ENCODE measurements at regions of chr5 and their contacts with region 1.

Region 1: GRCh38 chr5:82165740-82166530 is 112.2 kb downstream of the RPS23 start:
- DNase-seq: peak in 7 of 9 experiments; percentile 1 to 76 (median 30)
- ATAC-seq: peak; percentile 99
- H3K4me3 ChIP-seq: no peak overlapping the region
- H3K4me3 Mint-ChIP-seq: no peak overlapping the region
- H3K27ac ChIP-seq: no peak overlapping the region
- H3K27ac Mint-ChIP-seq: no peak overlapping the region
- H3K4me1 ChIP-seq: no peaks in the 10 kb centered on the region
- H3K4me1 Mint-ChIP-seq: no peaks in the 10 kb centered on the region
- H3K27me3 ChIP-seq: no peaks in the 10 kb centered on the region
- H3K27me3 Mint-ChIP-seq: no peaks in the 10 kb centered on the region
- CTCF ChIP-seq: peak; percentile 78

Region 2: GRCh38 chr5:81425569-81425968 is 740.4 kb before region 1 on chr5:
- CTCF ChIA-PET with region 1: interaction called, 36 read pairs
- POLR2A ChIA-PET with region 1: interaction called, 3 read pairs
- intact Hi-C with region 1: loop called (anchors 1 kb)
- DNase-seq: peak in 2 of 9 experiments; percentile 42 to 57
- ATAC-seq: peak; percentile 49
- H3K4me3 ChIP-seq: no peak overlapping the region
- H3K4me3 Mint-ChIP-seq: no peak overlapping the region
- H3K27ac ChIP-seq: no peak overlapping the region
- H3K27ac Mint-ChIP-seq: no peak overlapping the region
- H3K4me1 ChIP-seq: no peaks in the 10 kb centered on the region
- H3K4me1 Mint-ChIP-seq: peaks cover 7% of the 10 kb centered on the region
- H3K27me3 ChIP-seq: no peaks in the 10 kb centered on the region
- H3K27me3 Mint-ChIP-seq: no peaks in the 10 kb centered on the region
- CTCF ChIP-seq: peak; percentile 71

Region 3: GRCh38 chr5:81506900-81507588 is 658.9 kb before region 1 on chr5:
- CTCF ChIA-PET with region 1: interaction called, 14 read pairs
- POLR2A ChIA-PET with region 1: no interaction called
- intact Hi-C with region 1: loop called (anchors 1 kb)
- DNase-seq: peak in 7 of 9 experiments; percentile 2 to 72 (median 28)
- ATAC-seq: peak; percentile 65
- H3K4me3 ChIP-seq: no peak overlapping the region
- H3K4me3 Mint-ChIP-seq: no peak overlapping the region
- H3K27ac ChIP-seq: no peak overlapping the region
- H3K27ac Mint-ChIP-seq: no peak overlapping the region
- H3K4me1 ChIP-seq: no peaks in the 10 kb centered on the region
- H3K4me1 Mint-ChIP-seq: no peaks in the 10 kb centered on the region
- H3K27me3 ChIP-seq: no peaks in the 10 kb centered on the region
- H3K27me3 Mint-ChIP-seq: no peaks in the 10 kb centered on the region
- CTCF ChIP-seq: peak; percentile 66

Region 4: DNA sequence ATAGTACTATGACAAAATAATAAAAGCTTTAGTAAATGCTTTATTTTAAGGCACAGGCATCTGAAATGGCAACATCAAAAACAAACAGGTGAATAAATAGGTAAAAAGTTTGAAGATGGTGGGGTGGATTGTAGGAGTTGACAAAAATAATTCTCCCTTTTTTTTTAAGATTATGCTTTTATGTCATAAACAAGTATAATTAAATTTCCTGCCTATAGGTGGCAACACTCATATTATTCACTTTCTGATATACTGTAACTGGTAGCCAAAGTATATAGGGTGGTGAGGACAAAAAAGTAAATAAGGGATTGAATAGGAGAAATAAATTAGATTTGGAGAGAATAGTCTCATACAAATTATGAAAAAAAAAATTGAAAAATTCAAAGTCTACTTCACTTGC is 652.0 kb before region 1 on chr5:
- CTCF ChIA-PET with region 1: interaction called, 10 read pairs
- POLR2A ChIA-PET with region 1: no interaction called
- intact Hi-C with region 1: no loop called
- DNase-seq: peak in 1 of 9 experiments; percentile 35
- ATAC-seq: peak; percentile 42
- H3K4me3 ChIP-seq: no peak overlapping the region
- H3K4me3 Mint-ChIP-seq: no peak overlapping the region
- H3K27ac ChIP-seq: no peak overlapping the region
- H3K27ac Mint-ChIP-seq: no peak overlapping the region
- H3K4me1 ChIP-seq: no peaks in the 10 kb centered on the region
- H3K4me1 Mint-ChIP-seq: no peaks in the 10 kb centered on the region
- H3K27me3 ChIP-seq: no peaks in the 10 kb centered on the region
- H3K27me3 Mint-ChIP-seq: no peaks in the 10 kb centered on the region
- CTCF ChIP-seq: peak; percentile 51

Region 5: DNA sequence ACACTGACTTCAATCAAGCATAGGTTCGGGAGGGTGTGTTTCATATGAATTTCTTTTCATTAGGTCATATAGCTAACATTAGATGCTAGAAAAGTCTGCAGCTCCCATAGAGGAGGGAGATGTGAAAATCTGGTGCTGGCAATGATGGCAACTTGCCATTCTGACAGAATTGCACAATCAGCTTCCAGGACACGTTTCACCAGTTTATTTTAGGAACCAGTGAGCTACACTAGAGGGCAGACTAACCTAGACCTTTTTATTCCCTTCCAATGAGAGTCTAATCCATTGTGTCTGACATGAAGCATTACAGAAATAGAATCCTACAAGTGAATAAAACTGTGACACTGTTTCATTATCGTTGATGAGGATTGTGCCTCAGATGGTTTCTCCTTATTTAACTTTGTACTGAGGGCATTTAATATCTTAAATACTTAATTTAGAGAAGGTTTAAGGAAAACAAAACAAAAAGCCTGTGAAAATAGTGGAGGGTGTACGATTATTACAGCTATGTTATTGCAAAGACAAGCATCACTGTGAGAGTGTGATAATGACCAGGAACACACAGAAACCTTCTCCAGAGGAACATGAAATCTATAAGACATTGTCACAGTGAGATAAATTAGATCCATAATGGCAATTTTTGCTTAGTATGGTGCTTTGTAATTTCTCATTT is 475.5 kb after region 1 on chr5:
- CTCF ChIA-PET with region 1: no interaction called
- POLR2A ChIA-PET with region 1: no interaction called
- intact Hi-C with region 1: no loop called
- DNase-seq: peak in 2 of 9 experiments; percentile 22 to 45
- ATAC-seq: no peak
- H3K4me3 ChIP-seq: no peak overlapping the region
- H3K4me3 Mint-ChIP-seq: no peak overlapping the region
- H3K27ac ChIP-seq: no peak overlapping the region
- H3K27ac Mint-ChIP-seq: no peak overlapping the region
- H3K4me1 ChIP-seq: no peaks in the 10 kb centered on the region
- H3K4me1 Mint-ChIP-seq: no peaks in the 10 kb centered on the region
- H3K27me3 ChIP-seq: no peaks in the 10 kb centered on the region
- H3K27me3 Mint-ChIP-seq: no peaks in the 10 kb centered on the region
- CTCF ChIP-seq: no peak

Measured in CD8-positive, alpha-beta T cell (primary cell).